H1 (cell line): ENCODE measurements at regions of chr7 and their contacts with region 1.

Region 1: GRCh38 chr7:2148189-2148588 is 84.6 kb downstream of the MAD1L1 start:
- DNase-seq: no peak
- H3K4me3 ChIP-seq: no peak overlapping the region
- H3K27ac ChIP-seq: no peak overlapping the region
- H3K4me1 ChIP-seq: no peaks in the 10 kb centered on the region; a peak in 1 of 7 replicates
- H3K27me3 ChIP-seq: no peaks in the 10 kb centered on the region
- CTCF ChIP-seq: peak in 2 of 3 experiments; percentile 37 to 49; a peak in 3 of 4 replicates
- EP300 ChIP-seq: no peak
- POLR2A ChIP-seq: no peak
- RAD21 ChIP-seq: peak; percentile 12 to 37; a peak in 1 of 4 replicates

Region 2: DNA sequence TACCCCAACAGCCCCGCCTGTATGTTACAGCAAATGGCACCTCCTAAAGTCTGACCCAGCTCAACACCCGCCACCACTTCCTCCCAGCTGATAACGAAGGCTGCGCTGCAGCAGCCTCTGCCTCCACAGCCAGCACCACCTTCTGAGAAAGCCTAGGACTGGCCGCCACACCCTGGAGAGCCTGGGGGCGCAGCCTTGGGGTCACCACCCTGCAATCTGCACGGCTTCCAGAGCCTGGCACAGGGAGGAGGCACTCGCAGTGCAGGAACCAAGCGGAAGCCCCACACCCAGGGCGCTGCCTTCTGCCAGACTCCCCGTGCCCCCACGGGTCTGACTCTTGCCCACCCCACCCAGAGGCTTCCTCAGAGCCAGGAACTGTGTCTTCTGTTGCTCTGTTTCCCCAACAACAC is 27.9 kb before region 1 on chr7:
- CTCF ChIA-PET with region 1: interaction called, 11 read pairs
- POLR2A ChIA-PET with region 1: no interaction called
- DNase-seq: no peak
- H3K4me3 ChIP-seq: no peak overlapping the region
- H3K27ac ChIP-seq: no peak overlapping the region
- H3K4me1 ChIP-seq: no peaks in the 10 kb centered on the region
- H3K27me3 ChIP-seq: no peaks in the 10 kb centered on the region
- CTCF ChIP-seq: no peak
- EP300 ChIP-seq: no peak
- POLR2A ChIP-seq: no peak
- RAD21 ChIP-seq: no peak

Region 3: GRCh38 chr7:2129323-2130095 is 18.7 kb before region 1 on chr7:
- CTCF ChIA-PET with region 1: interaction called, 28 read pairs
- POLR2A ChIA-PET with region 1: no interaction called
- DNase-seq: no peak
- H3K4me3 ChIP-seq: no peak overlapping the region
- H3K27ac ChIP-seq: no peak overlapping the region
- H3K4me1 ChIP-seq: no peaks in the 10 kb centered on the region
- H3K27me3 ChIP-seq: no peaks in the 10 kb centered on the region
- CTCF ChIP-seq: no peak
- EP300 ChIP-seq: no peak
- POLR2A ChIP-seq: no peak
- RAD21 ChIP-seq: no peak